ENCODE measurements at regions of chr17 and their contacts with region 1.

Region 1: DNA sequence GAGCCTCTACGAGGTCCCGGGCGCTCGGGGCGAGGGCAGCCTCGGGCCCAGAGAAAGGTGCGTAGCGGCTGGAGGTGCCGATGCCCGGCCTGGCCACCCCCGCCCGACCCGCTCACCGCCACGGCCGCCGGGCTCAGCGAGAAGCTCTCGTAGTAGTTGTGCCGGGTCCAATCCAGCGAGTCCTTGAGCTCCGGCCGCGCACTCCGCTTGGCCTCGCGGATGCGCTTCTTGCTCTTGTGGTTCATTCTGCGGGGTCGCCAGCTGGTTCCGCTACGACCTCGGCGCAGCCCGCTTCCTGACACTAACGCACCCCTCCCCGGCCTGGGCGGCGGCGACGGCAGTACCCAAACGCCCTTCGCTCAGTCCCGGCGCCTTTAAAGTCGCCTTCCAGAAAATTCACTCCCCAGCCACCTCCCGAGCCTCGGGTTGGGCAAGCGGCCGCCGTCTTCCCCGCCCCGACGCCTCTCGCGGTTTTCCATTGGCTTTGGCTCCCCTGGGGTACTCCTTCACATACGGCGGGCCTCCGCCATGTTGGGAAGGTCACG is at the start of gene JMJD6:
- DNase-seq: peak; percentile 98
- H3K4me3 Mint-ChIP-seq: peak within 1 kb of the TSS; percentile 96
- H3K27ac Mint-ChIP-seq: peak within 1 kb of the TSS; percentile 93
- H3K4me1 Mint-ChIP-seq: peaks cover 66% of the 10 kb centered on the region
- H3K27me3 Mint-ChIP-seq: no peaks in the 10 kb centered on the region
- total RNA-seq, gene JMJD6: 33.0 to 33.6 TPM

Region 2: DNA sequence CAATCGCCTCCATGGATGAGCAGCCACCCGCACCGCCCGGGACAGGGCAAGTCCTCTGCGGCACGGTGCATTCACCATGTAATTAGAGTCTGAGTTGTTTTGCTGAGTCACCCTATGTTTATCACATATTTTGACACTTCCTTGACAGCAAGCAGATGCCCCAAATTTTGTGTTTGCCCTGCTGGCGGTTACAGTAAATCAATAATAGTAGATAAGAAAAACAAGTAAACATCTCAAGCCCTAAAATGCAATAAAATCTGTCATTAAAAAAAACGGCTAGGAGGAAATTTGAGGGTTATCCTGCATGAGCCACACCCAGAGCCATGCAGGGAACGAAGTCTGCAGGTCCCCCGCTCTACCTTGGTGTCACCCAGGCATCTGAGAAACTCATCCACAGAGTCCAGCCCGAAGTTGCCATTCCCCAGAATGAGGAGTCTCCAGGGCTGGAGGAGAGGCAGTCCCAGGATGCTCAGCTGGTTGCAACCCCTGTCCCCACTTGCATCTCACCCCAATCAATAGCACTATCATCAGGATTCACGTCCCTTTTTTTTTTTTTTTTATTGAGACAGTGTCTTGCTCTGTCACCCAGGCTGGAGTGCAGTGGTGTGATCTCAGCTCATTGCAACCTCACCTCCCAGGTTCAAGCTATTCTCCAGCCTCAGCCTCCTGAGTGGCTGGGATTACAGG is 66.2 kb before region 1 on chr17:
- CTCF ChIA-PET with region 1: no interaction called
- intact Hi-C with region 1: no loop called
- DNase-seq: no peak
- H3K4me3 Mint-ChIP-seq: no peak overlapping the region
- H3K27ac Mint-ChIP-seq: no peak overlapping the region
- H3K4me1 Mint-ChIP-seq: peaks cover 19% of the 10 kb centered on the region
- H3K27me3 Mint-ChIP-seq: no peaks in the 10 kb centered on the region

Region 3: GRCh38 chr17:76671123-76671911 is 55.0 kb before region 1 on chr17:
- CTCF ChIA-PET with region 1: interaction called, 7 read pairs
- intact Hi-C with region 1: loop called (anchors 2 kb)
- DNase-seq: peak; percentile 100
- H3K4me3 Mint-ChIP-seq: peak overlapping the region; percentile 93
- H3K27ac Mint-ChIP-seq: peak overlapping the region; percentile 92
- H3K4me1 Mint-ChIP-seq: peaks cover 29% of the 10 kb centered on the region
- H3K27me3 Mint-ChIP-seq: no peaks in the 10 kb centered on the region

Region 4: GRCh38 chr17:76753061-76753961 is 27.0 kb after region 1 on chr17:
- CTCF ChIA-PET with region 1: no interaction called
- intact Hi-C with region 1: loop called (anchors 1 kb)
- DNase-seq: peak; percentile 70
- H3K4me3 Mint-ChIP-seq: peak overlapping the region; percentile 83
- H3K27ac Mint-ChIP-seq: peak overlapping the region; percentile 100
- H3K4me1 Mint-ChIP-seq: peaks cover 22% of the 10 kb centered on the region
- H3K27me3 Mint-ChIP-seq: no peaks in the 10 kb centered on the region

Region 5: DNA sequence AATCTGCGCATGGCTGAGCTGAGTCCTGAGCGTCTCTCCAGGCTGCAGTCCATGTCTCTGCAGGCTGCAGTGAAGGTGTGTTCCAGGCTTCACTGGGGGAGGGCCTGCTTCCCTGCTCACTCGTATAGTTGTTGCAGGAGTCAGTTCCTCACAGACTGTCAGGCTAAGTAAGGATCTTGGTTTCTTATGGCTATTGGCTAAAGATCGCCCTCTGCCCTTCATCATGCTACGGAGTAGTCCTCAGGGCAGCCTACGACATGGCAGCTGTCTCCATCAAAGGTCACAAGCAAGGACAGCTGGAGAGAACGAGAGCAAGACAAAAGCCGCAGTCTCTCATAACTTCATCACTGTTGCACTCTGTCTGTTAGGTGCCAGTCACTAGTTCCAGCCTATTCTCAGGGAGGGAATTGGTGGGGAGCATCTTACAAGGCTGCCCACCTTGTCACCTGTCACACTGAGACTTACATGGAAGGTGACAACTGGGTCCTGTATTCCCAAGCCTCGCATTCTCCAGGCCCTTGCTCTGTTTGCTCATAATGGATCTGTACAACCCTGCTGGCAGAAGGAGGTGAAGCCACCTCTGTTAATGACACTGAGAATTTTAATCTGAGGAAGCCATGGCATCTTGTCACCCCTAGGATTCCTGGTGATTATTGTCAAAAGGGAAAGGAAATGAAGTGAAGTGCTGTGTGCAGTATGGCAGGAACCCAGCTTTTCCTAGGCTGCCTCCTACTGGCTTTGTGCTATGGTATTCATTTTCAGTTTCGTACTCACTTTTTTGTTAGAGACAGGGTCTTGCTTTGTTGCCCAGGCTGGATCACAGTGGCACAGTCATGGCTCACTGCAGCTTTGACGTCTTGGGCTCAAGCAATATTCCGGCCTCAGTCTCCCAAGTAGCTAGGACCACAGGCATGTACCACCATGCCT is 55.0 kb after region 1 on chr17:
- CTCF ChIA-PET with region 1: interaction called, 4 read pairs
- intact Hi-C with region 1: loop called (anchors 1 kb)
- DNase-seq: peak; percentile 40
- H3K4me3 Mint-ChIP-seq: no peak overlapping the region
- H3K27ac Mint-ChIP-seq: no peak overlapping the region
- H3K4me1 Mint-ChIP-seq: no peaks in the 10 kb centered on the region
- H3K27me3 Mint-ChIP-seq: no peaks in the 10 kb centered on the region

Region 6: GRCh38 chr17:77140166-77140878 is 414.0 kb after region 1 on chr17:
- CTCF ChIA-PET with region 1: no interaction called
- intact Hi-C with region 1: loop called (anchors 2 kb)
- DNase-seq: peak; percentile 100
- H3K4me3 Mint-ChIP-seq: peak overlapping the region; percentile 73
- H3K27ac Mint-ChIP-seq: peak overlapping the region; percentile 94
- H3K4me1 Mint-ChIP-seq: peaks cover 48% of the 10 kb centered on the region
- H3K27me3 Mint-ChIP-seq: no peaks in the 10 kb centered on the region